OCI-LY7 (cell line): ENCODE measurements at regions of chr11 and their contacts with region 1.

Region 1: DNA sequence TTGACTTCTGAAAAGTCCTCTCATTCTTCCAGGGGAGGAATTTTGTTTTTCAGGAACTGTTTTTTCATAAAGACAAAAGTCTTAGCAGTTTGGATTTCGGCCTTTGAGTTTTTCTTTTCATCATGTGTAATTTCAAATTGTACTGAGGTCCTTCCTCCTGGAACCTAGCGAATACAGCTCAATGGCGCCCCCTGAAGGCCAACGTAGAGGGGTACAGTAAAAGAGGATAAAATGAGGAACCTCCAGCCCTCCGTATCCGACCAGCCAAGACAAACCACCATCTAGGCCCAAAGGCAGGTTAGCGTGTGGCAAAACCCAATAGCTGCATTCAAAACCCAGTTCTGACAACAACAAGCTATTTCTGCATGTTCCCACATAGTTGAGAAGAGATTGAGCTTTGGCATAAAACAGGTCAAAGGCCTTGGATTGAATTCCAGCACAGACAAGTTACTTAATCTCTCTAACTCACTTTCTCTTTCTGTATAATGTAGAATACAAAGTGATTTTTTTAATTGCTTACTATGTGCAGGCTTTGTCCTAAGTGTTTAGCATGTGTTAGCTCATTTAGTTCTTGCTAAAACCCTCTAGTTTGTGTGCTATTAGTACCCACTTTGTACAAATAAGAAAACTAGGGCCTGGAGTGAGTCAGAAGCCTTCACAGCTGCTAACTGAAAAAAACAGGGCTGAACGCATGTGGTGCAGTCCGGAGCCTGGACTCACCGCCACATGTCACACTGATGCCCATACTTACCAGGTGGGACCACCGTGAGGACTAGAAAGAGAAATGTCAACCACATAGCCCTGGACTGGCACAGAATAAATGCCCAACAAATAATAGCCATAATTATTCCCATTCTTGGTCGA is 43.2 kb upstream of the ETS1 start:
- DNase-seq: peak; percentile 95
- H3K4me3 ChIP-seq: peak overlapping the region; percentile 3
- H3K27ac ChIP-seq: peak overlapping the region; percentile 97
- H3K4me1 ChIP-seq: peaks cover 71% of the 10 kb centered on the region
- CTCF ChIP-seq: peak; percentile 99

Region 2: GRCh38 chr11:128039140-128040021 is 591.2 kb before region 1 on chr11:
- CTCF ChIA-PET with region 1: no interaction called
- POLR2A ChIA-PET with region 1: no interaction called
- intact Hi-C with region 1: loop called (anchors 10 kb)
- DNase-seq: no peak
- H3K4me3 ChIP-seq: no peak overlapping the region
- H3K27ac ChIP-seq: no peak overlapping the region
- H3K4me1 ChIP-seq: no peaks in the 10 kb centered on the region
- CTCF ChIP-seq: 0 out of 2 replicates have a peak, but pooled peaks have one; percentile 23

Region 3: GRCh38 chr11:128290106-128290840 is 340.3 kb before region 1 on chr11:
- CTCF ChIA-PET with region 1: interaction called, 27 read pairs
- POLR2A ChIA-PET with region 1: interaction called, 13 read pairs
- intact Hi-C with region 1: loop called (anchors 1 kb)
- DNase-seq: peak; percentile 92
- H3K4me3 ChIP-seq: peak overlapping the region; percentile 43
- H3K27ac ChIP-seq: peak overlapping the region; percentile 63
- H3K4me1 ChIP-seq: peaks cover 35% of the 10 kb centered on the region
- CTCF ChIP-seq: peak; percentile 99

Region 4: DNA sequence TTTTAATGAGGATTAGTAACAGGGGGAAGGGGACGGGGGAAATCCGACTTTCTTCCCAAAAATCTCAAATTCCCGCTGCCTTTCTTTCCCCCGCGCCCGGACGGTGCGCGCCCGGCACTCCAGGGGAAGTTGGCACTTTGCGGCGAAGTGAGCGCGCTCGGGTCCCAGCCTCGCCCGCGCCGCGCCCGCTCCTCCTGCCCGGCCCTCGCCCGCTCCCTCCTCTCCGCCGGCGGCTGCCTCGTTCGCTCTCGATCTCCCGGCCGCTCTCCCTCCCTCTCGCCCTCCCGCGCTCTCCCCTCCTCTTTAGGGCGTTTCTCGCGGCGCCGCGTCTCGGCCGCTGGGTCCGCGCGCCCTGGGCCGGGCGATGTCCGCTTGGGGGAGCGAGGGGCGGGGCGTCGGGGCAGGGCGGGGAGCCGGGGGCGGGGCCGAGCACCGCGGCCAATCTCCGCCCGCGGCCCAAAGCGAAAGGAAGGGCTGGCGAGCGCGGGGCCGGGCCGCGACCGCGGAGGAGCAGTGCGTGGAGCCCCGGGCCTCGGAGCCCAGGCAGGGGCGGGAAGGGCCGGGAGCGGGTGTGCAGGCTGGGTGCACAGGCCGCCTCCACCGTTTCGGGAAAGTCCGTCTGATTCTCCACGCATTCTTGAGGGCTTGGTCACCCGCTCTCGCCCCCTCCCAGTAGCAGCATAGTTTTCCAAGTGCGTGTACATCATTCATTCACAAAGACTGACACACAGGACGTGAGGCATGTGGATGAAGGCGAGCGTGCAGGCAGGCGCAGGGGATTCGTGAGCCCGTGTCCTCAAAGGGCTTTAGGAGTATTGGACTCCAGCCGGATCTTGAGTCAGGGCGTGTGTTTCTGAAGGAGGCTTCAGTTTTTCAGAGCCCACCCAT is 108.3 kb before region 1 on chr11:
- CTCF ChIA-PET with region 1: interaction called, 4 read pairs
- POLR2A ChIA-PET with region 1: interaction called, 169 read pairs
- intact Hi-C with region 1: loop called (anchors 1 kb)
- DNase-seq: peak; percentile 93
- H3K4me3 ChIP-seq: peak overlapping the region; percentile 98
- H3K27ac ChIP-seq: peak overlapping the region; percentile 79
- H3K4me1 ChIP-seq: peaks cover 44% of the 10 kb centered on the region
- CTCF ChIP-seq: no peak

Region 5: DNA sequence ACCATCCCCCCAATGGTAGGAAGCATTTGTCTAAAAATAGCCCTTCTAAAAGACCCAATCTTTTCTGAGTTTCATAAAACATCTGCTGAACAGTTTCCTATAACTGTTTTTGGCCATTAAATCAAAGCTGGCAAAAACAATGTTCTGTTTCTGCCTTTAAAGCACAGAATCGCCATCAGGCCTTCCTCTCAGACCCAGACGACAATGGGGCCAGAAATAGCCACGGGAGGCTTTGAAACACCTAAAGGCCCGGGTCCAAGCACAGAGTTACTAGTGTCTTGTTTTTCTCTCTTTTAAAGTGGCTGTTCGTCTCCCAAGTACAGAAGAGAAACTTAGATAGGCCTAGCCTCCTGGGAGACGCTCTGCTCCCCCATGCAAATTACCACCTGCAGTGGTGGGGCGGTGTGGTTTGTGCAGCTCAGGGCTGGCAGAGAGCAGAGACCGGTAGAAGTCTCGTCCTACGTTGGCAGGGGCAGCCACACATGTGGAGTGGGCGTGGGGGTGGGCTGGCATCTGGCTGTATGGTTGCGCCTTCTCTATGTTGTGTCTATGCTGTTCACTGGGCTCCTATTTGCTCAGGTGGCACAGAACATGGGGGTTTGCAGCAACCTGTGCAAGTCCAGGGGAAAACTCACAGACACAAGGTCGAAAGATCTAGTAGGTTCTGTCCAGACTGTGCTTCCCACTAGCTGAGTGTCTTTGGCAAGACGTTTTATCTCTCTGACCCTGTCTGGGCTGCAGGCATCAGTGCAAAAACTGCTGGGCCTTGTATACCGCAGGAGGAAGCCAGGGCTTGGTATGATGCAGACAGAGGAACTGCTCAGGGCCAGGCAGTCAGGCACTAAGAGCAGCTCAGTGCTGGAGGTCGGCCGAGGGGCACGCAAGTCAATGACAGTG is 19.6 kb before region 1 on chr11:
- CTCF ChIA-PET with region 1: interaction called, 78 read pairs
- POLR2A ChIA-PET with region 1: interaction called, 631 read pairs
- intact Hi-C with region 1: no loop called
- DNase-seq: peak; percentile 98
- H3K4me3 ChIP-seq: peak overlapping the region; percentile 45
- H3K27ac ChIP-seq: peak overlapping the region; percentile 99
- H3K4me1 ChIP-seq: peaks cover 93% of the 10 kb centered on the region
- CTCF ChIP-seq: no peak

Region 6: DNA sequence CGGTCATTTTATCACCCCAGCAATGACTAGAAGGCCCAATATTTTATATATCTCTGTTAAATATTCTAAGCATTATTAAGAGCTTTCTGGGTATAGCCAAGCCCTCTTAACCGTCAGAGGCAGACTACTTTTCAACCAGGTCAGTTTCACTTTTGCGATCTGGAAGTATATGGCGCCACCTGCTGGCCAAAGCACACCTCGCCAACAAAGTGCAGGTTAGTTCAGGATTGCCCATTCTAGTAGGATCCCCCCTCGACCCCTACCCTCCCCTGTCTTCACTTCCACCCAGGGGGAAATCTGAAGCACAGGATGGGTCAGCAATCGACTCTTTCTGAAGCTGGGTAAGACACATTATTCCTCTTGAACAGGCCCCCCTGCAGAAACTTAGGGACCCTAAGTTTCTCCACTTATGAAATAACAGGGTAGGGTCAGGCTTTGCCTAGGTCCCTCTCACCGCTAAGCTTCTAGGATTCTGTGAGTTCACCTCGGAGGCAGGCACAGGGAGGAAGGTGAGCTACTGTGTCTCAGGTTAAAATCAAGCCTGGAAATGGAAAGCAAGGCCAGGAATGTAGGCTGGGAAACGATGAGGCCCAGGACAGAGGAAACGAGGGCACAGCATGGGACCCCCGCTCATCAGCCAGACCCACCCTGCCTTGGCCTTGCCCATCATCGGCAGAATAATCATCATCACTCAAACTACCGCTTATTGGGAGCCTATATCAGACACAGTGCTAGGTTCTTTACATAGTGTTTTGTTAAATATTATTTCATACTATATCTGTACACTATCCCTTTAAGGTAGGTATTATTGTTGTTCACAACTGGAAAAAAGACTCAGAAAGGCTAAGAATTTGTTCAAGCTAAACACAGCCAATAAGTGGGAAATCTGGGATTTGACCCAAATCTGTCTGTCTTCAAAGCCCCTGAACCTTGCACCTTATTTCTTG is 200.8 kb after region 1 on chr11:
- CTCF ChIA-PET with region 1: interaction called, 11 read pairs
- POLR2A ChIA-PET with region 1: interaction called, 40 read pairs
- intact Hi-C with region 1: loop called (anchors 1 kb)
- DNase-seq: peak; percentile 91
- H3K4me3 ChIP-seq: peak overlapping the region; percentile 37
- H3K27ac ChIP-seq: peak overlapping the region; percentile 71
- H3K4me1 ChIP-seq: peaks cover 60% of the 10 kb centered on the region
- CTCF ChIP-seq: peak; percentile 99